ENCODE measurements at regions of chr2 and their contacts with region 1.

Region 1: DNA sequence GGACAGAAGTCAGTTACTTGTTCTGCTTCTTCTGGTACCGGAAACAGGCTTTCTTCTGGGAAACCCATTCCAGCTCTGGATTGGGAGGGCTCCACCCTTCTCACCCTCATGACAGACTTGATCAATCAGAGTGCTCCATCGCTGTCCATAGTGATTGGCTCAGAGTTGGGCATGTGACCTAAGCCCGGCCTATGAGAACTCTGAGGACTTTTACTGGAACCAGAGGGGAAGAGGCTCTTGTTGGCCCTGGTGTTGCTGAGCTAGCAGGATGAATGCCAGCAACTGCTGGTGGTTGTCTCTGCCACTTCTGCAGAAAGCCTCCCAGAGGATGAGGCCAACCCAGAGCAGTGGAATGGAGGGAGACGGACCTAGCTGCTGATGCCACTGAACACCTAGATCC is 33.3 kb downstream of the TMEM37 start:
- DNase-seq: peak in 2 of 5 donors; percentile 45 to 52
- ATAC-seq: peak in 3 of 4 donors; percentile 43 to 78 (median 58)
- H3K4me3 ChIP-seq: no peak overlapping the region
- H3K27ac ChIP-seq: peak overlapping the region in 1 of 12 donors; percentile 28
- H3K4me1 ChIP-seq: peaks cover 0 to 12% (median 0%) of the 10 kb centered on the region in 12 donors
- H3K27me3 ChIP-seq: no peaks in the 10 kb centered on the region
- CTCF ChIP-seq: no peak
- POLR2A ChIP-seq: no peak

Region 2: GRCh38 chr2:119429225-119429981 is 35.6 kb before region 1 on chr2:
- intact Hi-C with region 1: loop called in 1 of 10 experiments (anchors 5 kb)
- DNase-seq: no peak
- ATAC-seq: peak in 2 of 4 donors; percentile 4 to 34
- H3K4me3 ChIP-seq: no peak overlapping the region
- H3K27ac ChIP-seq: peak overlapping the region in 4 of 12 donors; percentile 13 to 81 (median 44)
- H3K4me1 ChIP-seq: peaks cover 0 to 56% (median 11%) of the 10 kb centered on the region in 12 donors
- H3K27me3 ChIP-seq: peaks cover 0 to 23% (median 0%) of the 10 kb centered on the region in 9 donors
- CTCF ChIP-seq: no peak
- POLR2A ChIP-seq: no peak

Measured in heart left ventricle (tissue), 16 donors.